Posterior vena cava (tissue), 2 donors: ENCODE measurements at regions of chr17 and their contacts with region 1.

Region 1: DNA sequence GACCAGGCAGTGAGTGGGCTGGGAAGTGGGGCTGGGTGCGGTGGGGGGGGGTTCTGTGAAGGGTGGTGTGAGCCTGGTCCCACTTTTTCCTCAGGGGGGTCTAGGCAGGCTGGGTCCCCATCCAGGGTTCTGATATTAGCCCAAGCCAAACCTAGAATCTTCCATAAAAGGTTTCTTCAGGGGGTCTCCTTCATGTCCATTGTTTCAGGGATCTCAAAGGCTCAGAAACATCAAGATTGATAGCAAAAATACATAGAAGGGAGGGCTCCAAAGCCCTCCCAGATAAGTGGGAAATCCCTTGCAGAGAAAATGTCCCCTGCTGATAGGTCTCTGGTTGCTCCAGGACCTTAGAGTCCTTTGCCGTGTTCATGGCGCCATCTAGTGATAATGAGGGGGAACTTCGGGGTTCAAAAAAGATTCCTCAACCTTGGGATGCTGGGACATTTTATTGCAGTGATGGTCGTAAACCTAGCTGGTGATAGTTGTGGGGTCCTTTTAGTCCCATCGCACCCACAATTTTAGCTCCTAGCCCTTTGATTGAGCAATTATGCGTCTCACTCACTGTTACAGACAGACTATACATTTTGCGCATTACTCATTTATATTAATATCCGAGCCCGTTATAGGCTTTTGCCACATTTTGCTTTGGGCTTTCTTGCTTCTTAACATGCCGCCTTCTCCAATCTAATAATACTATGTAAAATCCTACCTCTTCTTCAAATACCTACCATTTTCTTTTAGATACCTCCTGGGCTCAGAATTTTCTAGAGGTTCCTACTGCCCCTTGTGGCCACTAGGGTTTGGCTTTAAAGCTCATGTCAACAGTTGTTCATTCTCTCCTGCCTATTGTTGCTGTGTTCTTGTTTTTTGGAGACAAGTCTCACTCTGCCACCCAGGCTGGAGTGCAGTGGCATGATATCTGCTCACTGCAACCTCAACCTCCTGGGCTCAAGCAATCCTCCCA is 35.1 kb downstream of the IGF2BP1 start:
- DNase-seq: no peak

Region 2: GRCh38 chr17:48804925-48805411 is 227.3 kb before region 1 on chr17:
- intact Hi-C with region 1: loop called in 1 of 2 experiments (anchors 10 kb)
- DNase-seq: peak; percentile 85

Region 3: GRCh38 chr17:48830840-48831548 is 201.3 kb before region 1 on chr17 and contains the start of gene CALCOCO2:
- intact Hi-C with region 1: no loop called
- DNase-seq: peak; percentile 97
- total RNA-seq, gene CALCOCO2: 146 to 181 TPM

Region 4: DNA sequence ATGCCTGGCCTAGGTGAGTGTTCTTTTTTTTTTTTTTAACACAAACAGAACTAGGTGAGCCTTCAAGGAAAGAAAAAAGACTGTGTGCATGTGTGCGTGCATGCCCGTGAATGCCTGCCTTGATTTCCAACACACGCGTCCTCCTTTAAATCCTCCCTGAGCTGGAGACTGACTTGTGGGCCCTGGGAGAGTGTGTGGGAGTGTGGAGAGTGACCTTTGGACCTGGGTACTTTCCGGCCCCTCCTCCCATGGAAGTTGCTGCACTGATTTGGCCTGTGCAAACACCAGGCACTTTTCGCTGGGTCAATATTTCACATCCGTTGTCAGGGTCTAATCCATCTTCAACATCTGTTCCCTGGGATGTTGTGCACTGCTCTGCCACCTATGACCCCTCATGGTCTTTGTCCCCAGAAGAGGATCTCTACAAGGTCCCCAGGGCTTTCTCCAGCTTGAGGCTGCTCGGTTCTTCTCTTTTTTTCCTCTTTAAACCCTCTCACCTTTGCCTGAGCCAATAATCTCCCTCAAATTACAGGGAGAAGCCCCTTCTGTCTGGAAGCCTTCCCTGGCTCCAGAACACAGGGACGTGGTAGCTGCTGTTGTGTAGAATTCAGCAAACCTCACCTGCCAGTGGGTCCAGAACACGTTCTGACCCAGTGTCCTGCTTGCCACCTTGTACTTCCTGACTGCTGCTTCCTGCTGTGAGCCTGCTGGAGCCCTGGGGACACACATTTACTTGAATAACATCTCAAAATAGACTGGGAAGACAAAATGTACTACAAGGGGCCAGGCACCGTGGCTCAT is 160.5 kb before region 1 on chr17:
- intact Hi-C with region 1: no loop called
- DNase-seq: no peak

Region 5: DNA sequence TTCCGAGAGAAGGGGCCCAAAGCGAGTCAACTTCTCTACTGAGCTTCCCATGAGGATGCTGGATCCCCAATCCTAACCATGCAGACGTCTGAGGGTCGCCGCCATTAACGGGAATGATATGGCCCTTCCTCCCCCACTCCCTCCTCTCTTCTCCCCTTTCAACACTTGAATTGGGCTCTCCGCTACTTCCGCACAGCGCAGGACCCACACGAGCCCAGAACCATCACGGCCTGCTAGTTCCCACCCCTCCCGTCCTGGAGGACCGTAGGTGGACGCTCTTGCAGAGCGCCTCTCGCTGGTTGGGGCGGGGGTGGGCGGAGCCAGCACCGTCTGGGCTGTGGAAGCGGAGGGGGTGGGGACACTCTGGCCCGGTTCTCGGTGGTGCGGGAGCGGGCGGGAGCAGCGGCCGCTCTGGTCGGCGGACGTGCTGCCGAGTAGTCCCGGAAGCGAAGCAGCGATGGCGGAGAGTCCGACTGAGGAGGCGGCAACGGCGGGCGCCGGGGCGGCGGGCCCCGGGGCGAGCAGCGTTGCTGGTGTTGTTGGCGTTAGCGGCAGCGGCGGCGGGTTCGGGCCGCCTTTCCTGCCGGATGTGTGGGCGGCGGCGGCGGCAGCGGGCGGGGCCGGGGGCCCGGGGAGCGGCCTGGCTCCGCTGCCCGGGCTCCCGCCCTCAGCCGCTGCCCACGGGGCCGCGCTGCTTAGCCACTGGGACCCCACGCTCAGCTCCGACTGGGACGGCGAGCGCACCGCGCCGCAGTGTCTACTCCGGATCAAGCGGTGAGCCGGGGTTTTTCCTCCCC is 124.0 kb before region 1 on chr17 and contains the start of gene UBE2Z:
- intact Hi-C with region 1: loop called in 1 of 2 experiments (anchors 10 kb)
- DNase-seq: peak; percentile 98
- total RNA-seq, gene UBE2Z: 53.3 to 60.2 TPM